ENCODE measurements at regions of chr13 and their contacts with region 1.

Region 1: GRCh38 chr13:97109841-97110492 is 112.2 kb upstream of the MBNL2 start:
- DNase-seq: peak; percentile 79
- ATAC-seq: peak; percentile 98
- H3K4me3 Mint-ChIP-seq: no peak overlapping the region
- H3K27ac Mint-ChIP-seq: no peak overlapping the region
- H3K4me1 Mint-ChIP-seq: peaks cover 10% of the 10 kb centered on the region
- H3K27me3 Mint-ChIP-seq: peaks cover 6% of the 10 kb centered on the region

Region 2: GRCh38 chr13:97221989-97222700 is 112.2 kb after region 1 on chr13 and contains the start of gene MBNL2:
- CTCF ChIA-PET with region 1: interaction called, 19 read pairs
- POLR2A ChIA-PET with region 1: no interaction called
- DNase-seq: peak; percentile 91
- ATAC-seq: peak; percentile 94
- H3K4me3 Mint-ChIP-seq: peak within 1 kb of the TSS; percentile 83
- H3K27ac Mint-ChIP-seq: peak within 1 kb of the TSS; percentile 81
- H3K4me1 Mint-ChIP-seq: peaks cover 45% of the 10 kb centered on the region
- H3K27me3 Mint-ChIP-seq: no peaks in the 10 kb centered on the region
- total RNA-seq, gene MBNL2: 11.6 to 12.3 TPM

Region 3: DNA sequence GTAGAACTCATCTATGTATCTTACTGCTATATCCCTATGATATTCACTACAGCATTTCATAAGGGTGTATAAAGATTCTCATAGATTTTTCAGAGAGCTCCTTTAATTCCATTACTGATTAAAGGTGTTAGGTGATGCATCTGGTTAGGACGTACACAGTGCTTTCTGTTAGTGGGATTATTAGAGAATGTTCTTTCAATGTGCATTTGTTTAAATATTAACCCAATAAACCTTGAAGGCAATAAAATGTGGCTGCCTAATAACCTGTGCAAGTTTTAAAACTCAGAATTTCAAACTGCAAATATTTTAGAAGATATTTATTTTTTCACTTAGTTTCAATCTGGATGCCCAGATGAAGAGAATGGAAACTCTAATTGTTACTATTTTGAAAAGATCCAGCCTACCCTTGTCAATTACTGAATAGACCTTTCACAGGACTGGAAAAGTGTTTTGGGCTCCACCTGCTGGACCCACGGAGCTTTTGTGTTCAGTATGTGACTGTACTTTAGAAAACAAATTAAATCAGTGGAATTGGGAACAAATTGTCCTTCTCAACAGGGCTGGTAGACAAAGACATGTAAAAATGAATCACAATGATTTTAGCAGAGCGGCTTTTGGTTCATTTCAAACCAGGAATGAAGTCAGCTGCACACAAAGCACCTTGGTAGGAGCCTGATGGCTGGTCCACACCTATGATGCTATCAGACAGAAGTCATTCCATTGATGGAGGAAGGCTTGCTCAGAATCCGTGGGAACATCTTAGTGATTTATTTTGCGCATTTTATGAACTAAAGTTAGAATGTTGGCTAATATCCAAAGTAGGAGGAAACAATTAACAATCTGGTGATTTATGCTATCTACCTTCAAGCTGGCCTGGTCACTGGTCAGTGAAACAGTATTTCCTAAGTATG is 234.6 kb after region 1 on chr13:
- CTCF ChIA-PET with region 1: interaction called, 94 read pairs
- POLR2A ChIA-PET with region 1: no interaction called
- DNase-seq: peak; percentile 61
- ATAC-seq: peak; percentile 67
- H3K4me3 Mint-ChIP-seq: no peak overlapping the region
- H3K27ac Mint-ChIP-seq: no peak overlapping the region
- H3K4me1 Mint-ChIP-seq: no peaks in the 10 kb centered on the region
- H3K27me3 Mint-ChIP-seq: no peaks in the 10 kb centered on the region

Region 4: GRCh38 chr13:97353927-97354675 is 244.1 kb after region 1 on chr13:
- CTCF ChIA-PET with region 1: interaction called, 136 read pairs
- POLR2A ChIA-PET with region 1: no interaction called
- DNase-seq: no peak
- ATAC-seq: no peak
- H3K4me3 Mint-ChIP-seq: no peak overlapping the region
- H3K27ac Mint-ChIP-seq: no peak overlapping the region
- H3K4me1 Mint-ChIP-seq: no peaks in the 10 kb centered on the region
- H3K27me3 Mint-ChIP-seq: no peaks in the 10 kb centered on the region

Region 5: GRCh38 chr13:97359181-97360057 is 249.5 kb after region 1 on chr13:
- CTCF ChIA-PET with region 1: interaction called, 136 read pairs
- POLR2A ChIA-PET with region 1: interaction called, 4 read pairs
- DNase-seq: peak; percentile 64
- ATAC-seq: peak; percentile 88
- H3K4me3 Mint-ChIP-seq: no peak overlapping the region
- H3K27ac Mint-ChIP-seq: no peak overlapping the region
- H3K4me1 Mint-ChIP-seq: no peaks in the 10 kb centered on the region
- H3K27me3 Mint-ChIP-seq: no peaks in the 10 kb centered on the region

Region 6: DNA sequence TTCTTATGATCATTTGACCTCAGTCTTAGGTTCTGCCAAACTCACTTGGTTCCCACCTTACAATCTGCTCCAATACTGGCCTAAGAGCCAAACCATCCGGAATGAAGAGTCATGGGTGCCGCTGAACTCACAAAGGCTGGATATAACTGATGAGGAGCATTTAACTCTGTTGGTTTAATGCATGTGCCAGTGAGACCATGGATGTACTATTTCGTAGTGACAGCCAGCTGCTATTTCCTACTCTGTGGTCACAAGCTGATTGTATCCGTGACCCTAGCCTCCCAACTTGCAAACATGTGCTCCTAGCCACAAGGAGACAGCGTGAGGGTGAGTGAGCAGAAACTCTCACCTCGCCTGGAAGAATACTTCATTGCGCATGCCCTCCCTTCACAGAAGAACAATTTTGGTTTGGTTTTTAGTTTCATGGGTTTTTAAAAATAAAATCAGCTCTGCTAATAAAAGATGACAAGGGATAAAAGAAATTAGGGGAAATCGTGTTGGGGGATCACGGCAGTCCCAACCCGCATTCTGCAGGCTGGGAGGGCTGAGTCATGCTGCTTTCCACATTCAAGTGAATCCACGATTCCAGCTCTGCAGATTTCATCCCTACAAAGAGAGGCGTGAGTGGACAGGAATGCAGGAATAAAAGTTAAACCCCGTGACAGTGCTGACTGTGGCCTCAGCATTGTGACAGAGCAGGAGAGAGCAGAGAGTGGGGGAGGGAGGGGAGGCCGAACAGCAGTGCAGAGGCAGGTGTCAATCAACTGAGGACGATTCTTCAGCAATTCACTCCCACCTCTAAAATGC is 257.3 kb after region 1 on chr13:
- CTCF ChIA-PET with region 1: interaction called, 136 read pairs
- POLR2A ChIA-PET with region 1: interaction called, 4 read pairs
- DNase-seq: no peak
- ATAC-seq: no peak
- H3K4me3 Mint-ChIP-seq: no peak overlapping the region
- H3K27ac Mint-ChIP-seq: no peak overlapping the region
- H3K4me1 Mint-ChIP-seq: peaks cover 9% of the 10 kb centered on the region
- H3K27me3 Mint-ChIP-seq: no peaks in the 10 kb centered on the region

Region 7: GRCh38 chr13:97432917-97433726 is 323.2 kb after region 1 on chr13:
- CTCF ChIA-PET with region 1: interaction called, 17 read pairs
- POLR2A ChIA-PET with region 1: interaction called, 3 read pairs
- DNase-seq: peak; percentile 98
- ATAC-seq: peak; percentile 86
- H3K4me3 Mint-ChIP-seq: peak overlapping the region; percentile 89
- H3K27ac Mint-ChIP-seq: peak overlapping the region; percentile 98
- H3K4me1 Mint-ChIP-seq: peaks cover 29% of the 10 kb centered on the region
- H3K27me3 Mint-ChIP-seq: peaks cover 2% of the 10 kb centered on the region

Measured in activated CD8-positive, alpha-beta T cell treated with anti-CD3 and anti-CD28 coated beads, Interleukin-2, amount 10 ng/mL, durations not matched to agents 7 days and 5 days (primary cell).